Activated CD4-positive, alpha-beta T cell treated with anti-CD3 and anti-CD28 coated beads, Interleukin-2, amount 10 ng/mL, durations not matched to agents 24 days and 14 days (primary cell): ENCODE measurements at regions of chr10 and their contacts with region 1.

Region 1: DNA sequence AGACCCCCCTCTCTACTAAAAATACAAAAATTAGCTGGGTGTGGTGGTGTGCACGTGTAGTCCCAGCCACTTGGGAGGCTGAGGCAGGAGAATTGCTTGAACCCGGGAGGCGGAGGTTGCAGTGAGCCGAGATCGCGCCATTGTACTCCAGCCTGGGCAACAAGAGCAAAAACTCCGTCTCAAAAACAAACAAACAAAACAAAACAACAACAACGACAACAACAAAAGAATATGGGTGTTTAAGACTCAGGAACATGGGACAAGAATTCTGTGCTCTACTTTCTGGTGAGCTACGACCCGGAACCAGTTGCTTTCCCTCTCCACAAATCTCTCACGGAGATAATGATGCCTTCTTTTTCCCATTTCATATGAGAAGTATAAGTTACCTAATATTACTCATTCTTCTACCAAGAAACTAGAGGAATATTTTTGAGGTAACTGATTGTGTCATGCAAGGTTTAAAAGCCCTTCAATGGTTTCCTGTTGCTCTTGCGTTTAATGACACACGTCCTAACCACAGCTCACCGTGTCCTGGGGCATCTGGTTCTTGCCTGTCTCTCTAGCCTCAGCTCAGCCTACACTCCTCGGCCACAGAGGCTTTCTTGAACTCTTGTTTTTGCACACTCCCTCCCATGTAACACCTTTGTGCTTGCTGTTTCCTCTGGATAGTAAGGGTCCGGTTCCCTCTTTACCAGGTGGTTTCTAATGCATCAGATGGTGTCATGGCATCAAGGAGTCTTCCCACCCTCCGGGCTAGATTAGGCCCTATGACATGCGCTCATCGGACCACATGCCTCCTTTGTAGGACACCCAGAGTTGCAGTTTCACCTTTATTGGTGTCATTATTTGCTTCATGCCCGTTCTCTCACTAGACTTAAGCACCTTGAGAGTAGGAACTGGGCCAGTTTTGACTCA is 67.5 kb downstream of the PFKFB3 start:
- DNase-seq: peak; percentile 92
- H3K4me3 Mint-ChIP-seq: peak overlapping the region; percentile 62
- H3K27ac Mint-ChIP-seq: peak overlapping the region; percentile 94
- H3K4me1 Mint-ChIP-seq: peaks cover 62% of the 10 kb centered on the region
- H3K27me3 Mint-ChIP-seq: no peaks in the 10 kb centered on the region

Region 2: DNA sequence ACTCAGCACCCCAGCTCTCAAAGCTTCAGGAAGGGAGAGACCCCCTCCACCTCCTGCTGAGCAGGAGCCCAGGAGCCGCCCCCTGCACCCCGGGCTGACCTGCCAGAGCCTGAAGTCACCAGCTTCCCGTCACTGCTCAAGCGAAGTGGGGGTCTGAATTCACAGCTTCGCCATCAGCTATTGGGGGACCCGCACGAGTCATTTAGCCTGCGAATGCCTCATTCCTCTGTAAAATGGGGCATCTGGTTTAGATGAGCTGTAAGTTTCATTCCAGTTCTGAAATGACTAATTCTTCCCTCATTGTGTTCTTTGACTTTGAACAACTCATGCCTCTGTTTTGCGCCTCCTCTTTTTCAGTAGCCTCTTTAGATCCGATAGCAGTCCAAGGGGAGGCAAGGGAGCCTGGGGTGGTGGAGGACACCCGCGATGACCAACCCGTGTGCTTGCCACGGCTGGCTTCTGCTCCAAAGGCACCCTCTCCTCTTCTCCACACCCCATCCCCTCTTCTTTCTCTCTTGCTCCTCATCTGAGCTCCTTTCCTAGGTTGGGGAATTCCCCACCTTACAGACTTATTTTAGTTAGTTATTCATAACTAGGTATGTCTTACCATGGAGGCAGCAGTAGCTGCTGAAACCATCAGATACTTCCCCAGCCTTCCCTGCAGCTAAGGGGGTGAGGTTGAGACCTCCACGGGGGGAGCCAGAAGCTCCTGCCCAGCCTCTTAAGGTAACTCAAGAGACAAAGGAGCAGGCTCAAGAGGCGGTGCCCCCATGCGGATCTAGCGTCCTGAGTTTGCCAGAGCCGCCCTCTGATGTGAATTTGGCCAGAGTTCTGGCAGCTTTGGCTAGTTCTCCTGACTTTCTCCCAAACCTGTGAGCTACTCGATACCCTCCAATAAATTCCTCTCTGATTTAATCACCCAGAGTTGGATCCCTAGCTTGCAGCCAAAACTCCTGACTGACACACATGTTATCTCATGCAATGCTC is 133.7 kb before region 1 on chr10:
- intact Hi-C with region 1: loop called (anchors 5 kb)
- DNase-seq: peak; percentile 85
- H3K4me3 Mint-ChIP-seq: peak overlapping the region; percentile 66
- H3K27ac Mint-ChIP-seq: peak overlapping the region; percentile 81
- H3K4me1 Mint-ChIP-seq: peaks cover 52% of the 10 kb centered on the region
- H3K27me3 Mint-ChIP-seq: peaks cover 1% of the 10 kb centered on the region

Region 3: GRCh38 chr10:6228010-6228511 is 42.1 kb before region 1 on chr10:
- intact Hi-C with region 1: no loop called
- DNase-seq: no peak
- H3K4me3 Mint-ChIP-seq: no peak overlapping the region
- H3K27ac Mint-ChIP-seq: no peak overlapping the region
- H3K4me1 Mint-ChIP-seq: peaks cover 8% of the 10 kb centered on the region
- H3K27me3 Mint-ChIP-seq: no peaks in the 10 kb centered on the region

Region 4: GRCh38 chr10:6239213-6239991 is 30.8 kb before region 1 on chr10:
- intact Hi-C with region 1: loop called (anchors 1 kb)
- DNase-seq: peak; percentile 87
- H3K4me3 Mint-ChIP-seq: no peak overlapping the region
- H3K27ac Mint-ChIP-seq: peak overlapping the region; percentile 16
- H3K4me1 Mint-ChIP-seq: peaks cover 34% of the 10 kb centered on the region
- H3K27me3 Mint-ChIP-seq: no peaks in the 10 kb centered on the region

Region 5: DNA sequence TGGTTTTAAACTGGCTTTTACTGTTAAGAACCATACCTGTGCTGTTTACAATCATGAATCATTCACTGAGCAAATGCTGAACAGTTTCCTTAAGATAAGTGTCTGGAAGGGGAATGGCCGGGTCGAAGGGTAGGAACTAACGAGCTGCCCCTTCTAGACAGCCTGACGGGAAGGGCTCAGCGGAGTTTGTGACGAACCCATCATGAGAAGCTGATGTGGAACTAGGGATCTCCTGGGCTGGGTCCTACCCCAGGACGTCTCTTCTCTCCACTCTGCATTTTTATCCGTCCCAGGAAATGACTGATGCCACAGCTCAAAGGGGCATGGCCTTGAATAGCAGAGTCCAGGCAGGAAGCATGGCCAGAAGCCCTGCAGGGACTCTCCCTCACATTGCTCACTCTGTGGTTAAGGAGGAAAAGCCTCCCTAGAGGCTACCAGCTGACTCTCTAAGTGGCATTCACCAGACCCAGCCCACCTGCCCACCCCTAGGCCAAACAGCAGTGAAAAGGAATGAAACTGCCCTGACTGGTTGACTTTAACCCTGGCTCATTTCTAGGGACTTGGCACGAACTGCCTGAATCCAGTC is 44.5 kb after region 1 on chr10:
- intact Hi-C with region 1: loop called (anchors 5 kb)
- DNase-seq: no peak
- H3K4me3 Mint-ChIP-seq: no peak overlapping the region
- H3K27ac Mint-ChIP-seq: no peak overlapping the region
- H3K4me1 Mint-ChIP-seq: peaks cover 8% of the 10 kb centered on the region
- H3K27me3 Mint-ChIP-seq: peaks cover 1% of the 10 kb centered on the region

Region 6: GRCh38 chr10:6401562-6402348 is 131.5 kb after region 1 on chr10:
- intact Hi-C with region 1: loop called (anchors 2 kb)
- DNase-seq: peak; percentile 90
- H3K4me3 Mint-ChIP-seq: peak overlapping the region; percentile 24
- H3K27ac Mint-ChIP-seq: peak overlapping the region; percentile 16
- H3K4me1 Mint-ChIP-seq: peaks cover 27% of the 10 kb centered on the region
- H3K27me3 Mint-ChIP-seq: peaks cover 3% of the 10 kb centered on the region